ENCODE measurements at regions of chr18 and their contacts with region 1.

Region 1: DNA sequence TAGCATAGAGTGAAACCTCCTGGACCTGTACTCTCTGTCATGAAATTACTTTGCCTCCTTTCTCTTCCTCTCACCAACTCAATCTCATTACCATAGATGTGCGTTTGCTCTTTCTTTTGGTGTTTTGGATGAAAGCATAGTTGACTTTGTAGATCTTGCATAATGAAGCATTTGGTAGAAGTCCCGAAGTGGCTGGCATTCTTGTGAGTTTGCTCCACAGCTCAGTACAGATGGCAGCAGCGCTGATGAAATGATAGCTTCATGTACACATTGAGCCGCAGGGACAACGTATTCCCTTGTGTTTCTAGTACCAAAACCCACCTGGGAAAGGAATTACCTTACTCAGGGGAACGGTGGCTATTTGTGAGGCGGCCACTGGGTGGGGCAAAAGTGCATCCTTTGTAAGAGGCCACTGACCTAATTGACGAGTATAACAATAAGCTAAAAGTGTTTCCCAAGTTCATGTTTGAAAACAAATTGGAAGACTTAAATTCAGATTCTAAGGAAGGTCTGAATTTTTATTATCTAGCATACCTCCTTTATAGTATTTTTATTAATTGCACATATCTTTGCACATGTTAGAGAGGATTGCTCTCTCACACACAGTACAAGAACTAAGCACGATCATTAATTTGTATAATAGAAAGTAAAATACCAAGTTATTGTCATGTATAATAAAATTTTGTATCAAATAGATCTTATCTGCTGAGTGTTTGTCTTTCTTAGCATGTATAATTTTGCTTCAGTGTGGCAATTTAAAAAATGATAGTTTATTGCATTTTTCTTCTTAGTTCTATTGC is 25.4 kb upstream of the CDH7 start:
- H3K4me3 ChIP-seq: no peak overlapping the region
- H3K27ac ChIP-seq: no peak overlapping the region
- H3K4me1 ChIP-seq: no peaks in the 10 kb centered on the region
- CTCF ChIP-seq: peak; percentile 43; the same call in 1 of the 2 replicates

Region 2: DNA sequence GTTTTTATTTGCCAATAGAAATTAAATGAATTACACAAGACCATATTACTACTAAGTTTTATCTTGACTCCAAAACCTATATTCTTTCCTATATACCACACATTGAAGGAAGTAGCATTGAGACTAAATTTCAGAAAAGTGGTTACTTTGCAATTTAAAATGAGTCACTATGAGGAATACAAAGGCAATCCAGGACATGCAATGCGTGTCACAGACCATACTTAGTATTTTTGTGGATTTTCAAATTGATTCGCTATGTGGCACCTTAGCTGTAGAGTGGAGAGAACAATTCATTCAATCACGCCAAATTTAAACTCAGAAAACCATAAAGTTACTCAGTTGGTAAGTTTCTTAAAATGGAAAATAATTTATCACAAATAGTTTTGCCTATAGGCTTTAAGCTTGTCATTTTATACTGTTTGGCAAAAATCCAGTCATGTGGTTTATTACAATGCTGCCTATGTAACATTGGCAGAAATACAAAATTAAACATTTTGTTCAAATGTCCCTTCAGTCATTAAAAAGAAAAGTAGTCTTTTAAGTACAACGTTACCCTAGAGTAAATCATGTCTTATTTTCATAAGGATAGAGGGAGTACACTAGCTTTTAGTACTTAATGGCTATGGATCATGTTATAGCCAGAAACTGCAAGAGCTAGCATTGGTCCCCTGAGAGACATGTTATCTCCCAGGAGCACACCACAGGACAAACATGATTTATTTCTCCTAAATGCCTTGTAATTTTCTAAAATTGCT is 197.4 kb before region 1 on chr18:
- CTCF ChIA-PET with region 1: no interaction called
- POLR2A ChIA-PET with region 1: no interaction called
- H3K4me3 ChIP-seq: no peak overlapping the region
- H3K27ac ChIP-seq: no peak overlapping the region
- H3K4me1 ChIP-seq: peaks cover 3% of the 10 kb centered on the region; the same call in 1 of the 2 replicates
- CTCF ChIP-seq: no peak

Region 3: GRCh38 chr18:65620076-65620696 is 105.3 kb before region 1 on chr18:
- CTCF ChIA-PET with region 1: no interaction called
- POLR2A ChIA-PET with region 1: no interaction called
- H3K4me3 ChIP-seq: no peak overlapping the region
- H3K27ac ChIP-seq: no peak overlapping the region
- H3K4me1 ChIP-seq: no peaks in the 10 kb centered on the region
- CTCF ChIP-seq: no peak

Region 4: DNA sequence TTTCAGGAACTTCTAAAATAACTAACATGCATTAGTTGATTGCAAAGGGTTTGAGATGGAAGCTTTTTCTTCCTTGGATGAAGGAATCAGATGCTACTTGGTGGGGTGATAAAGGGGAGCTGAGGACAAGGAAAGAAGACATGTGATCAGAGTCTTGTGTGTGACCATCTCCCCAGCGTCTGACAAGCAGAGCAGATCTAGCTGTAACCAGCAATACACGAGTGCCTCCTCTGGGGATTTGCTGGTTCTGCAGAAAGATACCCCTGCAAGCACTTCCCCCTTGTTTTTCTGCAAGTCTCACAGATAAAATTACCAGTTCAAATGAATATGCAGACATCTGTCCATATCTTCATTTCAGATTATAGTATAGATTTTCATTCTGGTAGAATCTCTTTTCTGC is 28.1 kb after region 1 on chr18:
- CTCF ChIA-PET with region 1: interaction called, 19 read pairs
- POLR2A ChIA-PET with region 1: no interaction called
- H3K4me3 ChIP-seq: no peak overlapping the region
- H3K27ac ChIP-seq: peak overlapping the region; percentile 74
- H3K4me1 ChIP-seq: peaks cover 44% of the 10 kb centered on the region
- CTCF ChIP-seq: peak; percentile 58; the same call in 1 of the 2 replicates

Region 5: DNA sequence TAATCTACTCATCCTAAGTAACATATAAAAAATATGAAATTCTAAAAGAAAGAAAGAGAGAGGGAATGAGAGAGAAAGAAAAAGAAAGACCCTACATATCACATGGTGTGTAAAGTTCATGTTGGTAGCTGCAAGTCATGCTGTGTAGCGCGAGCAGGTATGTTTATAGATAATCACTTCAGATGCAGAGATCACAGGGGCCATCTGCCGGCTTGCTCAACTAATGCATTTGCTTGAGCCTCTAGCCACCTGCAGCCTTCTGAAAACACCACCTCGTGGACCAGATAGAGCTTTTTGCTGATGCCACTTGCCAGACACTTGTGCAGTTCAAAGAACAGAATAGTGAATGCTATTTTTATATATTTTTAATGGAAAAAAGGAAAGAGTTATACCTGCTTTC is 62.9 kb after region 1 on chr18:
- CTCF ChIA-PET with region 1: interaction called, 22 read pairs
- POLR2A ChIA-PET with region 1: no interaction called
- H3K4me3 ChIP-seq: no peak overlapping the region
- H3K27ac ChIP-seq: no peak overlapping the region
- H3K4me1 ChIP-seq: peaks cover 20% of the 10 kb centered on the region
- CTCF ChIP-seq: peak; percentile 77

Measured in HEK293 (cell line).